Activated CD4-positive, alpha-beta memory T cell treated with anti-CD3 and anti-CD28 coated beads, Interleukin-2, amount 10 ng/mL, durations not matched to agents 7 days and 5 days (primary cell): ENCODE measurements at regions of chr19 and their contacts with region 1.

Region 1: GRCh38 chr19:19776041-19777008 is 43.4 kb upstream of the ZNF14 start:
- DNase-seq: peak; percentile 94
- H3K4me3 Mint-ChIP-seq: peak overlapping the region; percentile 92
- H3K27ac Mint-ChIP-seq: peak overlapping the region; percentile 77
- H3K4me1 Mint-ChIP-seq: peaks cover 41% of the 10 kb centered on the region
- H3K27me3 Mint-ChIP-seq: no peaks in the 10 kb centered on the region

Region 2: DNA sequence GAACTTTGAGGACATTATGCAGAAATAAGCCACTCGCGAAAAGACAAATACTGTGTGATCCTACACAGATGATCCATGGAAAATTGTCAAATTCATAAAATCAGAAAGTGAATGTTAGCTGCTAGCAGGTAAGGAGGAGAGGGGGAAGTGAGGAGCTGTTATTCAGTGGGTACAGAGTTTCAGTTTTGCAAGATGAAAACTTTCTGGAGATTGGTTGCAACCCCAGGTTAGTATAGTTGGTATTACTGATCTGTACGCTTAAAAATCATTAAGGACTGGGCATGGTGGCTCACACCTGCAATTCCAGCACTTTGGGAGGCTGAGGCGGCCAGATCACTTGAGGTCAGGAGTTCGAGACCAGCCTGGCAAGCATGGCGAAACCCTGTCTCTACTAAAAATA is 89.7 kb before region 1 on chr19:
- CTCF ChIA-PET with region 1: no interaction called
- POLR2A ChIA-PET with region 1: no interaction called
- DNase-seq: no peak
- H3K4me3 Mint-ChIP-seq: no peak overlapping the region
- H3K27ac Mint-ChIP-seq: no peak overlapping the region
- H3K4me1 Mint-ChIP-seq: no peaks in the 10 kb centered on the region
- H3K27me3 Mint-ChIP-seq: no peaks in the 10 kb centered on the region

Region 3: DNA sequence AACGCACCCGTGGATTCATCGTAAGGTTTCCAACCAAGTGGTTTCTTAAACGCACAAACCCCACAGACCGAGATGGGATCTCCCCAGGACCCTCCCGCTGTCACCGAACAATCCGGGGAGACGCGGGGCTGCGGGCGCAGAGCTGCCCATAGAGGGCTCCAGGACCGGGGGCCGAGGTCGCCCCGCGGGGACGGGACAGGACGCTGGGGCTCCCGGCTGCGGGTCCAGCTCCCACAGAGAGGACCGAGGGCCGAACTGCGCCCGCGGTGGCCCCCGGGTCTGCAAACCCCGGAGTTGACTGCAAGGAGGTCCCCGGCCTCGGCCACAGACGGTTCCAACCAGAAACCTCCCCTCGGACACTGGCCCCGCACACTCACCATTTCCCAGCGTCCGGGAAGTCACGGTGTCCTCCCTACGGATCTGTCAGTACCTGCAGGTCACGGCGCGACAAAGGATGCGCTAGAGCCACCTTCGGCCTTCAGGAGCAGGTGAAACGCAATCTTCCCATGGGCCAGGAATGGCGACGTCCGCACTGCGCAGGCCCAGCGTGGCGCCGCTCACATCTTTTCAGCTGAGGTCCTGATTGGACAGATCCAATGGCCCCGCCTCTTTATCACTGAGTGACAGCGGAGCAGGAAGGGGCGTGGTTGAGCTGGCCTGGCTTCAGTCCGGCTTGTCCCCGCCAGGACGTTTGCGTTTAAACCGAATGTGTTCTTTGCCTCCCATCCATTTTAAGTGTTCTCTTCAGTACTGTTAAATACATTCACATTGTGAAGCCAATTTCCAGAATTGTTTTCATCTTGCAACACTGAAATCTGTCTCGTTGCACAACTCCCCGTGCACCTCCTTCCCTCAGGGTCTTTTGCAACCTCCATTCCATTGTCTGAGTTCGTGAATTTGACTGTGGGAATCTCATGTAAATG is 43.5 kb before region 1 on chr19 and contains the start of gene ZNF14:
- CTCF ChIA-PET with region 1: interaction called, 3 read pairs
- POLR2A ChIA-PET with region 1: interaction called, 26 read pairs
- DNase-seq: peak; percentile 92
- H3K4me3 Mint-ChIP-seq: peak within 1 kb of the TSS; percentile 100
- H3K27ac Mint-ChIP-seq: peak within 1 kb of the TSS; percentile 89
- H3K4me1 Mint-ChIP-seq: peaks cover 20% of the 10 kb centered on the region
- H3K27me3 Mint-ChIP-seq: no peaks in the 10 kb centered on the region
- total RNA-seq, gene ZNF14: 8.0 to 8.4 TPM

Region 4: DNA sequence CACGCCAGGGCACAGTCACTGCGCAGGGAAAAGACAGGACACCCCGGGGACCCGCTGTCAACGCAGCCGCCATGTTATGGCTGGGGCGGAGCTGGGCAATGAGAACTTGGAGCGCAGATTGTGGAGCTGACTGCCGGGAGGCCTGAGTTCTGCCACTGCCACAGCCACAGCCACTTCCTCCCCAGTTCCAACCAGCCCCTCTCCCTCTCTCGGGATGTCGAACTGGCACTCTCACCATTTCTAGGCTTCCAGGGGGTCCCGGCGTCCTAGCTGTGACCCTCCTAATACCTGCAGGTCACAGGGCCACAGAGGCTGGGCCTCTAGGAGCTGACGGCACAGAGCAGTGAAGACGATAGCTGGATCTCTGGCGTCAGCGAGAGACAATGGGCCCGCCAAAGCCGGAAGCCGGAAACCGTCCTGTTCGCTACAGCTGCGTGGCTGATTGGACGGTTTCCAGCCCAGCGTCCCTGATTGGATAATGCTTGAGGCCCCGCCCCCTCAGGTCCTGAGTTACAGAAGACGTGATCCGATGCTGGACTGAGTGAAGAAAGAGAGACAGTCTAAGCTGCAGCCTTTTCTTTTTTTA is 45.1 kb after region 1 on chr19 and contains the start of gene ZNF506:
- CTCF ChIA-PET with region 1: interaction called, 6 read pairs
- POLR2A ChIA-PET with region 1: interaction called, 37 read pairs
- DNase-seq: peak; percentile 96
- H3K4me3 Mint-ChIP-seq: peak within 1 kb of the TSS; percentile 99
- H3K27ac Mint-ChIP-seq: peak within 1 kb of the TSS; percentile 99
- H3K4me1 Mint-ChIP-seq: peaks cover 29% of the 10 kb centered on the region
- H3K27me3 Mint-ChIP-seq: no peaks in the 10 kb centered on the region
- total RNA-seq, gene ZNF506: 24.6 to 25.5 TPM

Region 5: DNA sequence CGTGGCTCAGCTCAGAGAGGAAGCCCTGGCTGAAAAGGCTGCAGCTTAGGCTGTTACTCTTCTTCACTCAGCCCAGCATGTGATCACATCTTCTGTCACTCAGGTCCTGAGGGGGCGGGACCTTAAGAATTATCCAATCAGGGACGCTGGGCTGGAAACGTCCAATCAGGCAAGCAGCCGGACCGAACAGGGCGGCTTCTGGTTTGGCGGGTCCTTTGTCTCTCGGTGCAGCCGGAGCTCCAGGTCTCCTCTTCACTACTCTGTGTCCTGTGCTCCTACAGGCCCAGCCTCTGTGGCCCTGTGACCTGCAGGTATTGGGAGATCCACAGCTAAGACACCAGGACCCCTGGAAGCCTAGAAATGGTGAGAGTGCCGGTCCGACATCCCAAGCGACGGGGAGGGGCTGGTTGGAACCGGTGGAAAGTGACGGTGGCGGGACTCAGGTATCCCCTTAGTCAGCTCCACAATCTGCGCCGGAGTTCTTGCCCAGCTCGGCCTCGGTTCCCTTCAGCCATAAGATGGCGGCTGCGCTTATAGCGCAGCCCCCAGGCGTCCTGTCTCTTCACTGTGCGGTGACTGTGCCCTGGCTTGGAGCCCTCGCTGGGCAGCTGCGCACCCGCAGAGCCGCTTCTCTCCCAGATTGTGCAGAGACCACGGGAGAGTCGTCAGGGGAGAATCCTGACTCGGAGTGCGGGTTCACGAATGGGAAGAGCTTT is 124.6 kb after region 1 on chr19 and contains the start of gene ZNF93:
- CTCF ChIA-PET with region 1: no interaction called
- POLR2A ChIA-PET with region 1: interaction called, 11 read pairs
- DNase-seq: peak; percentile 93
- H3K4me3 Mint-ChIP-seq: peak within 1 kb of the TSS; percentile 96
- H3K27ac Mint-ChIP-seq: peak within 1 kb of the TSS; percentile 93
- H3K4me1 Mint-ChIP-seq: peaks cover 31% of the 10 kb centered on the region
- H3K27me3 Mint-ChIP-seq: no peaks in the 10 kb centered on the region
- total RNA-seq, gene ZNF93: 11.4 to 11.7 TPM

Region 6: GRCh38 chr19:19937403-19937802 is 161.1 kb after region 1 on chr19:
- CTCF ChIA-PET with region 1: no interaction called
- POLR2A ChIA-PET with region 1: no interaction called
- DNase-seq: no peak
- H3K4me3 Mint-ChIP-seq: no peak overlapping the region
- H3K27ac Mint-ChIP-seq: no peak overlapping the region
- H3K4me1 Mint-ChIP-seq: no peaks in the 10 kb centered on the region
- H3K27me3 Mint-ChIP-seq: no peaks in the 10 kb centered on the region